Left cardiac atrium (tissue), 4 donors: ENCODE measurements at regions of chr15 and their contacts with region 1.

Region 1: GRCh38 chr15:91852741-91853510 is 582 bp upstream of the SLCO3A1 start:
- DNase-seq: peak; percentile 84
- ATAC-seq: peak; percentile 81 to 87

Region 2: GRCh38 chr15:91706322-91707032 is 146.4 kb before region 1 on chr15:
- intact Hi-C with region 1: loop called (anchors 5 to 10 kb)
- DNase-seq: peak; percentile 85
- ATAC-seq: peak; percentile 82 to 88

Region 3: GRCh38 chr15:91759560-91759959 is 93.4 kb before region 1 on chr15:
- intact Hi-C with region 1: no loop called
- DNase-seq: no peak
- ATAC-seq: no peak

Region 4: DNA sequence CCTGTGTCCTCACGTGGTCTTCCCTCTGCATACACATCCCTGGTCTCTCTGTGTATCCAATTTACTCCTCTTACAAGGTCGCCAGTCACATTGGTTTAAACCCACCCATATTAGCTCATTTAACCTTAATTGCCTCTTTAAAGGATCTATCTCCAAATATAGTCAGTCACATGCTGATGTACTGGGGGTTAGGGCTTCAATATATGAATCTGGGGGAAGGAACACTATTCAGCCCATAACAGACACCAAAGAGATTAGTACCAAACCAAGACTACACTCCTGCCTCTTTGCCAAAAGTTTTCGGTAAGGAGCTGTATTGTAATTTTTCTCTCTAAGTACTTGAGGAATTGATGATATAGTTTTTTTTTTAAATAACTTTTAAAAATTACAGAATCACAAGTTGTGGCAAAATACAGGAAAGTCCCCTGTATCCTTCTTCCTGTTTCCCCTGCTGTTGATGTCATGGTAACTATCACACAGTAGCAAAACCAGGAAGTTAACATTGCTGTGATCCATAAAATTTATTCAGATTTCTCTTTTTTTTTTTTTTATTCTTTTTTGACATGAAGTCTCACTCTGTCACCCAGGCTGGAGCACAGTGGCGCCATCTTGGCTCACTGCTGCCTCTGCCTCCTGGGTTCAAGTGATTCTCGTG is 68.4 kb after region 1 on chr15:
- intact Hi-C with region 1: loop called in 1 of 2 experiments (anchors 10 kb)
- DNase-seq: no peak
- ATAC-seq: peak in 1 of 2 donors; percentile 32